Esophagus muscularis mucosa (tissue), 4 donors: ENCODE measurements at regions of chr4 and their contacts with region 1.

Region 1: DNA sequence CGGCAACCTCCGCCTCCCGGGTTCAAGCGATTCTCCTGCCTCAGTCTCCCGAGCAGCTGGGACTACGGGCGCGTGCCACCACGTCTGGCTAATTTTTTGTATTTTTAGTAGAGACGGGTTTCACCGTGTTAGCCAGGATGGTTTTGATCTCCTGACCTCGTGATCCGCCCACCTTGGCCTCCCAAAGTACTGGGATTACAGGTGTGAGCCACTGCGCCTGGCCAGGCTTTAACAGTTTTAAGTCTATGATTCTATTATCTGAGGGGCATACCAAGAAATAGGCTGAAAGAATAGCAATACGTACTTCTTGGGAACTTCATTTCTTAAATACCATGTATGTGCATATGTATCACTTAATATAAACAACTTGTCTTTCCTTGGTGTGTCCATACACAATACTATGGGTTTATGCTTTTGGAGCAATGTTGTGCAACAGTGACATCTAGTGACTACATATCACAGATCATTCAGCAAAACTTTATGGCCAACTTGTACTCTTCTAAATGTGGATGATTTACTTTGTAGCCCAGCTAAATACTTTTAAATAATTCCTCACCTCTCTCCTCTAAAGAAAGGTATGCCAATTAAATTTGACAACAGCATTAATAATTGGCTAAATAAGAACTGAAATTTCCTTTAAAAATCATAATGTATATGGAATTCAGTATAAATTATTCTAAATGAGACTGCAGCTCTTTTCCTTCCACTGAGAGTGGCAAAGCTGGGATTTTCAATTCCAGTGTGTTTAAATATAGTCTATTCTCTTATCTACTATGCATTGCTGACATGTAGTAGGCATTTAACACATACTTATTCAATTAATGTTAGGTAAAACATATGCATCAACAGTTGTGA is 10.4 kb downstream of the SLC9B1 start:
- DNase-seq: no peak
- H3K4me3 ChIP-seq: no peak overlapping the region
- H3K27ac ChIP-seq: no peak overlapping the region
- H3K4me1 ChIP-seq: peaks cover 19 to 29% (median 21%) of the 10 kb centered on the region in 4 donors
- H3K27me3 ChIP-seq: no peaks in the 10 kb centered on the region
- CTCF ChIP-seq: peak; percentile 62 to 73 (median 70)
- EP300 ChIP-seq: no peak
- POLR2A ChIP-seq: no peak

Region 2: GRCh38 chr4:102449751-102450352 is 559.2 kb before region 1 on chr4:
- intact Hi-C with region 1: loop called (anchors 2 kb)
- DNase-seq: no peak
- H3K4me3 ChIP-seq: no peak overlapping the region
- H3K27ac ChIP-seq: no peak overlapping the region
- H3K4me1 ChIP-seq: peaks cover 0 to 7% (median 2%) of the 10 kb centered on the region in 4 donors
- H3K27me3 ChIP-seq: no peaks in the 10 kb centered on the region
- CTCF ChIP-seq: peak; percentile 51 to 56 (median 56)
- EP300 ChIP-seq: no peak
- POLR2A ChIP-seq: no peak

Region 3: DNA sequence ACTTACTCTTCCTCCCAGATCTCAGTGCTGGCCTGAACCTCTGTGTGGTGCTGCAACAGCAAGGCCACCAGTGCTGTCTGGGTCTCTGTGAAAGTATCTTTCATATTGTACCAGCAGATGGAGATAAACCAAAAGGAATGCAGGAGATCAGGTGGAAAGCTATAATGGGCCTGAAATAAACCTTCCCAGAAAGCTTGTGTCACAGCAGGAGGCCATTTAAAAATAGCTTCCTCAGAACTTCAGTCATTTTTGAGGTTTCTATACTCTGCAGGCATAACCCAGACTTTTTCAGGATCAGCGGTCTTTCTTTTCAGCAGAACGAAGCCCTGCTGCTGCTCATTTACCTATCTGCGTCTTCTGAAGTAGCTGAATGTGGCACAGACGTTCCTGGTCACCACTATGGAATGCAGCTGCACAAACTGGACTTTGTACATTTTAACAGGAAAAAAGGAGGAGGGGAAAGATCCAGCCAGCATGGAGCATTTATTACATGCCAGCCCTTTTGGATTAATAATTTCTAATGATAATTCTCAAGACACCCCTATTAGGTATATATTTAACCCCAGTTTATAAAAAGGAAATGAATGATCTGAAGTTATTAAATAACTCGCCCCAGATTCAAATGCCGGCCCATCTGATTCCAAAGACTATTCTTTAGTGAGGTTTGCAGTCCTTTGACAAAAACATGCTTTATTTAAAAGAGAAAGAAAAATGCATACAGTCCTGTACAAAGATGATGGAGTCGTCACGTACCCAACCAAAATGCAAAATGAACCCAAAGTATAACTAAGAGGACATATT is 388.2 kb before region 1 on chr4:
- intact Hi-C with region 1: loop called (anchors 5 kb)
- DNase-seq: no peak
- H3K4me3 ChIP-seq: no peak overlapping the region
- H3K27ac ChIP-seq: peak overlapping the region in 1 of 4 donors; percentile 36
- H3K4me1 ChIP-seq: peaks cover 0 to 13% (median 9%) of the 10 kb centered on the region in 4 donors
- H3K27me3 ChIP-seq: no peaks in the 10 kb centered on the region
- CTCF ChIP-seq: peak; percentile 59 to 67 (median 60)
- EP300 ChIP-seq: no peak
- POLR2A ChIP-seq: no peak

Region 4: GRCh38 chr4:103198111-103198765 is 189.1 kb after region 1 on chr4 and contains the start of gene CENPE:
- intact Hi-C with region 1: no loop called
- DNase-seq: peak; percentile 97
- H3K4me3 ChIP-seq: peak within 1 kb of the TSS; percentile 75 to 80 (median 78)
- H3K27ac ChIP-seq: peak within 1 kb of the TSS; percentile 72 to 78 (median 77)
- H3K4me1 ChIP-seq: peaks cover 4 to 16% (median 12%) of the 10 kb centered on the region in 4 donors
- H3K27me3 ChIP-seq: peaks cover 0 to 8% (median 0%) of the 10 kb centered on the region in 4 donors
- CTCF ChIP-seq: no peak
- EP300 ChIP-seq: no peak
- POLR2A ChIP-seq: no peak
- total RNA-seq, gene CENPE: 0.42 to 1.2 (median 0.69) TPM